Left lung (tissue), 14 donors: ENCODE measurements at regions of chr3 and their contacts with region 1.

Region 1: GRCh38 chr3:98022978-98023820 is 11.9 kb downstream of the GABRR3 start:
- DNase-seq: peak; percentile 70 to 96 (median 84)
- ATAC-seq: peak; percentile 92
- H3K4me3 ChIP-seq: no peak overlapping the region
- H3K27ac ChIP-seq: no peak overlapping the region
- H3K4me1 ChIP-seq: no peaks in the 10 kb centered on the region
- H3K27me3 ChIP-seq: no peaks in the 10 kb centered on the region
- CTCF ChIP-seq: peak; percentile 91 to 97

Region 2: DNA sequence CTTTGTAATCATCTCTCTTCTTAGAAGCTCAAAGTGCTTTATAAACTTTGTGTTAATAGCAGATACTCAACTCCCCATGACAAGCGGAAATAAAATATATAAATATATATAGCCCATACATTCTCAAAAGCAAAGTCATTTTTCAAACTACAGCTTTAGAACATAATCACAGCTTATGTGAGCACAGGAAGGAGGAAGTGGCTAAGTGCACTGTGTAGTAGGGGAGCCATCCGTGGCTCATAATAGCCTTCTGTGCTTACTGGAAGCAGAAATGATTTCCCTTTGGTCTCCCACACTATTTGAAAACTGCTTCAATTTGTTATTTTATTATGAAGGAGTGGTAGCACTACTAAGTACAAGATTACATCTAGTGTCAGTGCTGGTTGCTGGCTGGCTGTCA is 410.1 kb before region 1 on chr3:
- intact Hi-C with region 1: no loop called
- DNase-seq: no peak
- ATAC-seq: no peak
- H3K4me3 ChIP-seq: no peak overlapping the region
- H3K27ac ChIP-seq: no peak overlapping the region
- H3K4me1 ChIP-seq: no peaks in the 10 kb centered on the region
- H3K27me3 ChIP-seq: no peaks in the 10 kb centered on the region
- CTCF ChIP-seq: no peak

Region 3: GRCh38 chr3:97795956-97796355 is 227.2 kb before region 1 on chr3:
- intact Hi-C with region 1: loop called in 1 of 2 experiments (anchors 5 kb)
- DNase-seq: no peak
- ATAC-seq: no peak
- H3K4me3 ChIP-seq: no peak overlapping the region
- H3K27ac ChIP-seq: no peak overlapping the region
- H3K4me1 ChIP-seq: no peaks in the 10 kb centered on the region
- H3K27me3 ChIP-seq: no peaks in the 10 kb centered on the region
- CTCF ChIP-seq: no peak